ENCODE measurements at regions of chr6 and their contacts with region 1.

Region 1: DNA sequence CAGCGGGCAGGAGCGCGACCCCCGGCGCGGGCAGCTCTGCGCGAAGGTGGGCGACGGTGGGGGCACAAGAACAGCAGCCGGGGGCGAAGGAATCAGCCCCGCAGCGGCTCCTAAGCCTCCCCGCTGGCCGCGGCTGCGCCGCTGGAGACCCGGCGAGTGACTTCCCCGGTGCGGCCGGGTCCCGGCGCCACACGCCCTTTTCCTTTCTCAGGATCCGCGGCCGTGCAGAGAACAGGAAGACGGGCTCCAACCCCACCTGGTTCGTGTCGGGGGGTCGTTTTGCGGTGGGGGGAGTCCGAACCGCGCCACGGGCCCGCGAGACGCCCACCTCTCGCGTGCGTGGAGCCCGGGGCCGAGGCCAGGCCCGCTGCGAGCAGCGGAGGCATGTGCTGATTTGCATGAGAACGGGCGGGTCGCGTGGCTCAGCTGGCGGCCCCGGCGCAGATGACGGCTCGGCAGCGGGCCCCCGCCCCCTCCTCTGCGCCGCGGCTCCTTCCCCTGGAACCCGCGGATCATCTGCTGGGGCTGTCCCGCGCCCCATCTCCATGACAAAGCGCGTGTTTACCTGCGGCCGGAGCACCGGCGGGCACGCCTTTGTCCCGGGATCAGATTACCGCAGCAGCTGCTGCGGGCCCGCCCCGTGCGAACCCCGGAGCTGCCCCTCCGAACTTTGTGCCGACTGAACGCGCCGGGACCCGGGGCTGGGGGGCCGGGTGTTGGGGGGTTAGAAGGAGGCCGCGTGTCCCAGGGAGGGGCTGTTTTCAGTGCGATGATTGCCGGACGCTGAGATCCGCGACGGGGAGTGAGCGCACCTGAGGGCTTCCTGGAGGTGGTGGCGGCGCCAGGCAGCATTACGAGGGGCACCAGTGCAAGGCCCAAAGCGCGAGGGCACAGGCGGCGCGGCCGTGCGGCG is 4.9 kb upstream of the DLL1 start:
- DNase-seq: peak in 5 of 9 donors; percentile 34 to 54 (median 41)
- ATAC-seq: peak; percentile 58
- H3K4me3 ChIP-seq: peak overlapping the region; percentile 58
- H3K4me3 Mint-ChIP-seq: peak overlapping the region; percentile 56 to 97 (median 78)
- H3K27ac ChIP-seq: no peak overlapping the region
- H3K27ac Mint-ChIP-seq: peak overlapping the region in 1 of 9 donors; percentile 60
- H3K4me1 ChIP-seq: peaks cover 11 to 42% of the 10 kb centered on the region in 2 donors
- H3K4me1 Mint-ChIP-seq: peaks cover 11 to 46% (median 34%) of the 10 kb centered on the region in 7 donors
- H3K27me3 ChIP-seq: peaks cover 4 to 9% of the 10 kb centered on the region in 2 donors
- H3K27me3 Mint-ChIP-seq: peaks cover 13 to 80% (median 59%) of the 10 kb centered on the region in 5 donors

Region 2: GRCh38 chr6:169789982-169790927 is 505.5 kb before region 1 on chr6:
- CTCF ChIA-PET with region 1: interaction called, 12 read pairs
- POLR2A ChIA-PET with region 1: no interaction called
- intact Hi-C with region 1: loop called (anchors 1 to 5 kb)
- DNase-seq: peak; percentile 41 to 78 (median 65)
- ATAC-seq: peak; percentile 96
- H3K4me3 ChIP-seq: peak overlapping the region; percentile 68
- H3K4me3 Mint-ChIP-seq: peak overlapping the region; percentile 81 to 91 (median 86)
- H3K27ac ChIP-seq: peak overlapping the region; percentile 12
- H3K27ac Mint-ChIP-seq: peak overlapping the region in 4 of 9 donors; percentile 15 to 29 (median 19)
- H3K4me1 ChIP-seq: peaks cover 0 to 6% of the 10 kb centered on the region in 2 donors
- H3K4me1 Mint-ChIP-seq: peaks cover 0 to 18% (median 15%) of the 10 kb centered on the region in 7 donors
- H3K27me3 ChIP-seq: no peaks in the 10 kb centered on the region
- H3K27me3 Mint-ChIP-seq: peaks cover 26 to 47% (median 38%) of the 10 kb centered on the region in 5 donors

Region 3: DNA sequence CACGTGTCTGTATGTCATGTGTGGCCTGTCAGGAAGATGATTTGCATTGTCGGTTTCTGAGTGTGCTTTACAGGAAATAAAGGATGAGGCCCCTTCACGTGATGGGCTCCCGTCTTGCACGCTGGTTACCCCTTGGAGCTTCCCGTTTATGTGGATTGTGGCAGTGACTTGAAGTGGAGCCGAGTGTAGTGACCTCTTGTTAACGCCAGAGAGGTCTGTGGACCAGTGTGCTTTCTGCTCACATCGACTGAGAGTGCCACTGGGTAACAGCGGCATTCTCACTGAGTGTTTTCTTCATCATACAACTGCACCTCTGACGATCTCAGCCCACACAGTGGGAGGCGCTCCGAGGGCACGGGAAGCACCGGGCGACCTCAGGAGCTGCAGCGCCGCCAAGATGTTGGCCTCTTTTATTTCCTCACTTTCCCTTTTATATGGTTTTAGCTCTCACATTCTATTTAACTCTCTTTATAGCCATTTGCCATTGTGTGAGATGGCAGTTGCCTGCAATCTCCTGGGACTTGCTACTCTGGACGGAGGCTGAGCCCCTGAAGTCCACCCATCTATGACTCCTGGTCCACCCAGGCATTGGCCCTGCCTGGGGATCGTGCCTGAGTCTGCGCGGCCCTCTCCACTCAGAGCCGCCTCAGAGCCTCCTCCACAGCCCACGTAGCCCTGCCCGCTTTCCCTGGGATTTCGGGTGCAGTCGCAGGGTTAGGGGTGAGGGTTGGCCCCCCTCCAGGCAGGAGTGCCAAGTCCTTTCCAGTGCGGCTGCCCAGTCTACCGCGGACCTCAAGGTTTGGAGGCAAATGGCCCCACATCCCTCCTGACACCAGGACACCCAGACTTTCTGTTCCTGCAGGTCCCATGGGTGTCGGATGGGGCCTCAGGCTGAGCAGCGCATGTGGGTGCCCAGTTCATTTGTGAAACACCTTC is 305.4 kb before region 1 on chr6:
- CTCF ChIA-PET with region 1: interaction called, 3 read pairs
- POLR2A ChIA-PET with region 1: no interaction called
- intact Hi-C with region 1: loop called in 1 of 2 experiments (anchors 1 kb)
- DNase-seq: peak in 8 of 9 donors; percentile 24 to 57 (median 49)
- ATAC-seq: peak; percentile 85
- H3K4me3 ChIP-seq: peak overlapping the region; percentile 30
- H3K4me3 Mint-ChIP-seq: peak overlapping the region; percentile 63 to 85 (median 76)
- H3K27ac ChIP-seq: peak overlapping the region; percentile 29
- H3K27ac Mint-ChIP-seq: peak overlapping the region; percentile 1 to 83 (median 78)
- H3K4me1 ChIP-seq: peaks cover 0 to 18% of the 10 kb centered on the region in 2 donors
- H3K4me1 Mint-ChIP-seq: peaks cover 22 to 29% (median 26%) of the 10 kb centered on the region in 7 donors
- H3K27me3 ChIP-seq: no peaks in the 10 kb centered on the region
- H3K27me3 Mint-ChIP-seq: no peaks in the 10 kb centered on the region

Region 4: DNA sequence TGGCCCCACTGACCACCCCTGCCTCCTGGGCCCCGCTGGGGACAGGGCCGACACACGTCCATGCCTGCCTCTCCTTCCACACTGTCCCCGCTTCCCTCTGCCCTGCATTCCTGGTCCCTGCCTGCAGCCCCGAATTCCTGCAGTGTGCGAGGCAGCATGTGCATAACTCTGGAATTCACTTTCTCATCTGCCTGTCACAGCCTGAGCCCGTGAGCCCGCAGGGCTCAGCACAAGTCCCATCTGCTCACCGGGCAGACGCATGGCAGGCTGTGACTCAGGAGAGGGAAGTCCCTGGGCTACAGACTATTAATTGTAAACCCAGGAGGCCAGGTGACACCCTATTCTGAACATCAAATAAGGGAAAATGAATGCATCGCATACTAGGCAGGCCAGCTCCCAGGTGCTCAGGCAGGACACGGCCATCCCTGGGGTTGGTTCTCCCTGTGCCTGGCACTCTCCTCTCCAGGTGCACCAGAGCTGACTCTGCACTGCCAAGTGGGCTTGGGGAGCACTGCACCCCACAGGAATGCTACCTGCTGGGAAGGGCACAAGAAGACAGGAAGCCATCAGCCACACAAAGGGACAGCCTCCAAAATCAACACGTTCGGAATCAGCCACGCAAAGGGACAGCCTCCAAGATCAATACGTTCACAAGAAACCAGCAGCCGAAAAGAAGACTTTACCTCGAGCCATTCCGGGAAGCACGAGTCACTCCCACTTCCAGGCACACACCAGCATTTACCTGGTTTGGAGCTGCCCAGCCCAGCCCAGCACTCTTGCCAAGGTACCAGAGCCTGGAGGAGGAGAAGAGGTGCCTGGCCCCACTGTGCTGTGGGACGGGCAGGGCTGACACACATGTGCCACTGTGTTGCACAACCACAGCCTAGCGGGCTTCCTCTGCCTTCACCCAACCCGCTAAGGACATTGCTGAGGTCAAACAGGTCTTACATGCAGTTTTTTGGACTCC is 70.8 kb before region 1 on chr6:
- CTCF ChIA-PET with region 1: no interaction called
- POLR2A ChIA-PET with region 1: no interaction called
- intact Hi-C with region 1: loop called in 1 of 2 experiments (anchors 5 kb)
- DNase-seq: no peak
- ATAC-seq: peak; percentile 54
- H3K4me3 ChIP-seq: no peak overlapping the region
- H3K4me3 Mint-ChIP-seq: no peak overlapping the region
- H3K27ac ChIP-seq: no peak overlapping the region
- H3K27ac Mint-ChIP-seq: no peak overlapping the region
- H3K4me1 ChIP-seq: peaks cover 0 to 6% of the 10 kb centered on the region in 2 donors
- H3K4me1 Mint-ChIP-seq: peaks cover 3 to 25% (median 17%) of the 10 kb centered on the region in 7 donors
- H3K27me3 ChIP-seq: no peaks in the 10 kb centered on the region
- H3K27me3 Mint-ChIP-seq: peaks cover 0 to 3% (median 0%) of the 10 kb centered on the region in 5 donors

Region 5: DNA sequence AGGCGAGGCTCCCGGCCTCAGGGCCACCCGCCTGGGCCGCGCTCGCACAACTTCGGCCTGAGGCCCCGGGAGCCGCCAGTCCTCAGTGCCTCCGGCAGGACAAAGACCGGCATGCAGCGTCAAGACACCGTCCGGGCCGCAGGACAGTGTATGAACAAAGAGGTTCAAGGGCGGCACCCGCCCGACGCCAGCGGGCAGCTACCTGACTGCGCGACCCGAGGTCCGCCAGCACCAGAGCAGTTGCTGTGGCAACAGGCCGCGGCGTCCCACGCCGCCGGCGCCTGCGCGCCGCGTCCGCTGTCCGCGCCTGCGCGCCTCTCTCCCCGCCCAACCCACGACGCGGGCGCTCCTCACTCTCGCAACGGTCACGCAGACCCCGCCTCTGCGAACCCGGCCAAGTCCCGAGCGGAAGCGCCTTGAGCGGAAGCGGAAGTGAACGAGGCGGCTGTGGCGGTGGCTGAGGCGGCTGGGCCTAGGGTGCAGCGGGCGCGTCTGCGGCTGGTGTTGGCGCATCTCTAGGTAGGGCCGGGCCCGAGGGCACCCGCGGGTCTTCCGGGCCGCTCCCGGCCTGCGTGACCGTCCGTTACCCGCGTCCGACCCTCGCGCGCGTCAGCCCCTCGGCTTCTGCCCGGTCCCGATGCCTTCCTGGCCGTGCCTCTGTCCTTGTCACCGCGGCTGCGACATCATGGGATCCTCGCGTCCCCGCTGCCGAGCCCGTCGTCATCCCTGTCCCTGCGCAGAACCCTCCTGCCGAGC is 10.7 kb after region 1 on chr6 and contains the start of gene FAM120B:
- CTCF ChIA-PET with region 1: interaction called, 15 read pairs
- POLR2A ChIA-PET with region 1: interaction called, 29 read pairs
- intact Hi-C with region 1: loop called (anchors 1 kb)
- DNase-seq: peak; percentile 90 to 95 (median 94)
- ATAC-seq: peak; percentile 97
- H3K4me3 ChIP-seq: peak within 1 kb of the TSS; percentile 84
- H3K4me3 Mint-ChIP-seq: peak within 1 kb of the TSS; percentile 88 to 98 (median 96)
- H3K27ac ChIP-seq: peak within 1 kb of the TSS; percentile 87
- H3K27ac Mint-ChIP-seq: peak within 1 kb of the TSS; percentile 92 to 98 (median 95)
- H3K4me1 ChIP-seq: peaks cover 28 to 43% of the 10 kb centered on the region in 2 donors
- H3K4me1 Mint-ChIP-seq: peaks cover 35 to 49% (median 43%) of the 10 kb centered on the region in 7 donors
- H3K27me3 ChIP-seq: no peaks in the 10 kb centered on the region
- H3K27me3 Mint-ChIP-seq: peaks cover 5 to 37% (median 11%) of the 10 kb centered on the region in 5 donors
- total RNA-seq, gene FAM120B: 27.2 to 53.4 (median 35.5) TPM

Measured in naive thymus-derived CD4-positive, alpha-beta T cell (primary cell).